Endothelial cell of umbilical vein (primary cell): ENCODE measurements at regions of chr1 and their contacts with region 1.

Region 1: DNA sequence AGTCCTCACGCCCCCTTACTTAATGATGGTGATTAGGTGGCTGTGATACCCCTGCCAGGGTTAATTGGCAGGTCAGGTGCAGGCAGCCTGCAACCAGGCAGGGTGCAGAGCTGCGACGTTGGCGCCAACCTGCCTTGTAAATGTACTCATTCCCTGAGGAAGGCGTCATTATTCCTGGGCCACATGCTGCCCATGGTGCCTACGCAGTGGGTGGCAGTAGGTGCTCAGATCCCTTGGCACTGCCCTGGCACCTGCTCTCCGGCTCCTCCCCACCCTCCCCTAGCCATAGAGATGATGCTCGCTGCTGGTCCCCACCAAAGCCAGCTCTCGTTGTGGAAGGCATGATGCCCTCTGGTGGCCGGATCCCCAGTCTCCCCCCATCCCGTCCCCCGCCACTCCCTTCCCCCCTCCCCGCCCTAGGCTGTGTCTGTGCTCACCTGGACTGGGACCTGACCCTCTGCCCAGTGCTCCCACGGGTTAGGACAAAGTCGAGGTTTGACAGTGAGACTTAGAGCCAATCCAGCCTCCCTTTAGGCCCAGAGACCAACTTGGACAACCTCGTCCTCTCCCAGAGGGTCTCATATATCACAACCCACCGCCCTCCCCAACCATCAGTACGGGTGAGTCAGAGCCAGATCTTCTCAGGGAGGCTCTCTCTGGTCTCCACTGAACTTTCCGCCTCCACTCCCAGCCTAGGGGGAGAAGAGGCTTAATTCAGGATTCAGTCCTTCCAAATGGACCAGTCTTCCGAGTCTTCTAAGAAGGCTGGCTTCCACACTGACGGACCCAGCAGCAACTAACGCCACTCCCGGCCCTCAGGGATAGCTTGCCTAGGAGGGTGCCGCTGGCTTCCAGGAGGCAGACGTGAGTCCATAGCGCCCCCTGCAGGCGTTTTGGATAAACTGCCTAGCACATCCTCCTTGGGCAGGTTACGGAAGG is 5.7 kb downstream of the KRTCAP2 start:
- DNase-seq: peak; percentile 91
- H3K4me3 ChIP-seq: peak overlapping the region in 1 of 3 experiments; percentile 9
- H3K27ac ChIP-seq: peak overlapping the region; percentile 45
- H3K4me1 ChIP-seq: peaks cover 22% of the 10 kb centered on the region
- H3K27me3 ChIP-seq: no peaks in the 10 kb centered on the region
- CTCF ChIP-seq: peak; percentile 88 to 90
- POLR2A ChIP-seq: no peak

Region 2: DNA sequence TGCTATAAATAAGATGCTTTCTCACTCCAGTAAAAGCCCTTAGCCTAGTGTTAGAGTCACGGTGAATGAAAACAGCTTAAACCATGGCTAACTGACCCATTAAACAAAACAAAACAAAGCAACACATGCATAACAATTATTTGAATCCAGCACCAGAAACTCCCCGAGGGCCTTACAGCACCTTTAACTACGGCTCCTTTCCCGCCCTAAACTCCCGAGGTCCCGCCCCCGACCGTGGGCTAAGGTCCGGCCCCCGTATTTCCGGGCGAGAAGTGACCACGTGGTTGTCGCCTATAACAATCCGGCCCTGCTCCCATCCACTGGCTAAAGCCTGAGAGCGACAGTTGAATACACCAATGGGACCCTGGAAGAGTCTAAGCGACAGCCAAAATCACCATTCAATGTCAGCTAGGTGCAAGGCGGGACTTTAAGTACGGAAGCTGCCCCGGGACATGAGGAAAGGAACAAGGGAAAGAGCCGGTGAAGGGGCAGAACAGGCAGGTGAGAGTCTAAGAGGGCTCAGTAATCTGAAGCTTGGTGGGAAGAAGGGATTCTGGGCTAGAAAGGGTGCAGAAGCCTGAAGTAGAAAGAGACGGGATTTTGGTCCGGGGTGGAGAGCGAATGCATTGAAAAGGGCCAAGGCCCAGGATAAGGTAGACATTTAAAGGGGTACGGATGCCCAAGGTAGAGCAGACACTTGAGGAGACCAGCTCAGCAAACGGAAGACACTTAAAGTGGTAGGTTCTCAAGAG is 184.4 kb before region 1 on chr1 and contains the start of gene FLAD1:
- CTCF ChIA-PET with region 1: no interaction called
- POLR2A ChIA-PET with region 1: no interaction called
- dilution Hi-C with region 1: no loop called
- intact Hi-C with region 1: no loop called
- DNase-seq: peak; percentile 100
- H3K4me3 ChIP-seq: peak within 1 kb of the TSS; percentile 67 to 98 (median 92)
- H3K27ac ChIP-seq: peak within 1 kb of the TSS; percentile 39
- H3K4me1 ChIP-seq: peaks cover 11% of the 10 kb centered on the region
- H3K27me3 ChIP-seq: no peaks in the 10 kb centered on the region
- CTCF ChIP-seq: no peak
- POLR2A ChIP-seq: peak; percentile 56
- total RNA-seq, gene FLAD1: 42.2 and 48.8 TPM in 2 replicates

Region 3: DNA sequence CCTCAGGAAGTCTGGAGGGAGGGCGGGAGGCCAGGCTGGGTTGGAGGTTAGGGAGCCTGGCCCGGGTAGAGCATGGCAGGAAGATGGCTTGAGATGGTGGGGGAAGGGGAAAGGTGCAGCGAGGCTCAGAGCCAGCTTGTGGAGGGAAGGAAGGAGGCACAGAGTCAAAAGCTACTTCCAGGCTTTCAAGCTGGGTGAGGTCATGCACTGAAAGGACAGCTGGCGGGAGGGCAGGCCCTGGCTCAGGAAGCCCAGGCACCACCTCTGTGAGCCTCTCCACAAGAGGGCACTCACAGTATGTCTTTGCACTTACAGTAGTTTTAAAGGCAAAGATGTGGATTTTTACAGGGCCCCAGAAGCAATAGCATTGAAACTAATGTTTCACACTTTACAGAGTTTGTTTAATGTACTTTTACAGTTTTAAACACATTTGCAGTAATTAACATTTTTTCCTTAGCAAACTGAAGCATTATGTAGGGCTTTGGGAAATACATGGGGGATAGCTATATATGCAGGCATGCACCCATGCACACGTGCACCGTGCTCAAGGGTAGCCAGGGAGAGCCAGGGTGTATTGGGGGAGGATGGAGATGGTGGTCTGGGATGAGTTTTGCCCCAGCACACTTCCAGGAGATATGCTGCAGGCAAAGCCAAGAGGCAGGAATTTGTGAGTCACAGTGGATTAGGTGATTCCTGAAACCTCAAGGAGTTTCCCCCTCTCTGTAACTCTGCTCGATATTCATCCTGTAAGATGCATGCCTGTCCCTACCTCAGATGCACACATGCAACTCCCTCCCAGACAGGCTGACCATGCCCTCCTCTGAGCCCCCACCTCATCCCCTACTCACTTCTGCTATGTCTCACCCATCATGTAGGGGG is 122.4 kb before region 1 on chr1:
- CTCF ChIA-PET with region 1: interaction called, 17 read pairs
- POLR2A ChIA-PET with region 1: no interaction called
- dilution Hi-C with region 1: no loop called
- intact Hi-C with region 1: loop called (anchors 1 kb)
- DNase-seq: peak; percentile 79
- H3K4me3 ChIP-seq: no peak overlapping the region
- H3K27ac ChIP-seq: no peak overlapping the region
- H3K4me1 ChIP-seq: peaks cover 18% of the 10 kb centered on the region
- H3K27me3 ChIP-seq: no peaks in the 10 kb centered on the region
- CTCF ChIP-seq: peak; percentile 79 to 89
- POLR2A ChIP-seq: no peak

Region 4: DNA sequence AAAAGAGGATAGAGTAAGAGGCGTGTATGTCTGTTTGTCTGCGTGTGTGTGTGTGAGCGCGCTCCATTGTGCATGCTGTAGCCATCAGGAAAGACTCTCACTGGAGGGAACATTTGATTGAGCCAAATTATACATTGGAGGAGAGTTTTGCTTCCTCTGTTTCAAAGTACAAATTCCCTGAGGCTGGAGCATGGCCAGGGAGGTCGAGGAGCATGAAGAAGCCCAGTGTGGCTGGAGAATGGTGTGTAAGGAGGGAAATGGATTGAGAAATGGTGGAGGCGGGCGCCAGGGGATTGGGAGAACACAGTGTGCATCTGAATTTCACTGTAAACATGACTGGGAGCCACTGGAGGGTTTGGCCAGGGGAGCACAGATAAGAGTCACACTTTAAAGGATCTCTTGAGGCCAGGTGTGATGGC is 61.8 kb before region 1 on chr1:
- CTCF ChIA-PET with region 1: interaction called, 673 read pairs
- POLR2A ChIA-PET with region 1: no interaction called
- dilution Hi-C with region 1: no loop called
- intact Hi-C with region 1: no loop called
- DNase-seq: peak; percentile 88
- H3K4me3 ChIP-seq: no peak overlapping the region
- H3K27ac ChIP-seq: no peak overlapping the region
- H3K4me1 ChIP-seq: peaks cover 3% of the 10 kb centered on the region
- H3K27me3 ChIP-seq: peaks cover 6 to 9% of the 10 kb centered on the region in 2 experiments
- CTCF ChIP-seq: no peak
- POLR2A ChIP-seq: no peak

Region 5: DNA sequence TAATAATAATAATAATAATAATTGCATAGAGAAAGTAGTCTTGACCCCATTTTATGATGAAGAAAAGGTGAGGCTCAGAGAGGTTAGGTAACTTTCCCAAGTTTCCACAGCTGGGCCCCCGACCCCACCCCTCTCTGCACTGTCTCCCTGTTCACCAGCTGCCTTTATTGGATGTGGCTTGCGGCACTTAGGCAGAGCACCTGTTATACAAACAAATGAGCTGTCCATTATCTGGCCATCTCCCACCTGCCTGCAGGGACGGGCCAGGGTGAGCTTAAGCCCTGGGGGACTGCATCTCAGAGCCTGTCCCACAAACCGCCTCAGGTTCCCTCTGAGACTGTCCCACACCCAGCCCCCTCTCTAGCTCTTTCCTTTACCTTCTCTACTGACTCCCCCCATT is 49.8 kb before region 1 on chr1:
- CTCF ChIA-PET with region 1: interaction called, 42 read pairs
- POLR2A ChIA-PET with region 1: no interaction called
- dilution Hi-C with region 1: no loop called
- intact Hi-C with region 1: no loop called
- DNase-seq: no peak
- H3K4me3 ChIP-seq: no peak overlapping the region
- H3K27ac ChIP-seq: no peak overlapping the region
- H3K4me1 ChIP-seq: no peaks in the 10 kb centered on the region
- H3K27me3 ChIP-seq: peaks cover 0 to 4% of the 10 kb centered on the region in 2 experiments
- CTCF ChIP-seq: no peak
- POLR2A ChIP-seq: no peak

Region 6: GRCh38 chr1:155127105-155127964 is 40.1 kb before region 1 on chr1 and contains the start of gene EFNA1:
- CTCF ChIA-PET with region 1: interaction called, 204 read pairs
- POLR2A ChIA-PET with region 1: interaction called, 4 read pairs
- dilution Hi-C with region 1: no loop called
- intact Hi-C with region 1: loop called (anchors 1 kb)
- DNase-seq: peak; percentile 93
- H3K4me3 ChIP-seq: peak within 1 kb of the TSS; percentile 51 to 95 (median 91)
- H3K27ac ChIP-seq: peak within 1 kb of the TSS; percentile 68
- H3K4me1 ChIP-seq: peaks cover 59% of the 10 kb centered on the region
- H3K27me3 ChIP-seq: no peaks in the 10 kb centered on the region
- CTCF ChIP-seq: no peak
- POLR2A ChIP-seq: peak; percentile 95
- total RNA-seq, gene EFNA1: 107 and 111 TPM in 2 replicates

Region 7: GRCh38 chr1:155135415-155136028 is 31.9 kb before region 1 on chr1 and contains the start of gene SLC50A1:
- CTCF ChIA-PET with region 1: interaction called, 204 read pairs
- POLR2A ChIA-PET with region 1: interaction called, 4 read pairs
- dilution Hi-C with region 1: no loop called
- intact Hi-C with region 1: loop called (anchors 1 kb)
- DNase-seq: peak; percentile 97
- H3K4me3 ChIP-seq: peak within 1 kb of the TSS; percentile 21 to 62 (median 53)
- H3K27ac ChIP-seq: peak within 1 kb of the TSS; percentile 98
- H3K4me1 ChIP-seq: peaks cover 49% of the 10 kb centered on the region
- H3K27me3 ChIP-seq: no peaks in the 10 kb centered on the region
- CTCF ChIP-seq: peak in 1 of 2 donors; percentile 32
- POLR2A ChIP-seq: peak; percentile 93
- total RNA-seq, gene SLC50A1: 29.5 and 30.8 TPM in 2 replicates

Region 8: GRCh38 chr1:155145491-155145890 is 21.9 kb before region 1 on chr1:
- CTCF ChIA-PET with region 1: interaction called, 31 read pairs
- POLR2A ChIA-PET with region 1: no interaction called
- dilution Hi-C with region 1: no loop called
- intact Hi-C with region 1: loop called (anchors 1 kb)
- DNase-seq: no peak
- H3K4me3 ChIP-seq: no peak overlapping the region
- H3K27ac ChIP-seq: no peak overlapping the region
- H3K4me1 ChIP-seq: no peaks in the 10 kb centered on the region
- H3K27me3 ChIP-seq: peaks cover 4% of the 10 kb centered on the region in 2 experiments
- CTCF ChIP-seq: no peak
- POLR2A ChIP-seq: no peak